ENCODE measurements at regions of chr18 and their contacts with region 1.

Region 1: GRCh38 chr18:79912409-79912991 is 39.0 kb downstream of the SLC66A2 start:
- DNase-seq: peak in 3 of 7 donors; percentile 21 to 49 (median 22)
- H3K4me3 ChIP-seq: no peak overlapping the region
- H3K27ac ChIP-seq: no peak overlapping the region
- H3K4me1 ChIP-seq: no peaks in the 10 kb centered on the region
- H3K27me3 ChIP-seq: no peaks in the 10 kb centered on the region
- CTCF ChIP-seq: no peak
- POLR2A ChIP-seq: no peak

Region 2: GRCh38 chr18:79720355-79720733 is 192.2 kb before region 1 on chr18:
- intact Hi-C with region 1: loop called in 1 of 2 experiments (anchors 10 kb)
- DNase-seq: no peak
- H3K4me3 ChIP-seq: no peak overlapping the region
- H3K27ac ChIP-seq: no peak overlapping the region
- H3K4me1 ChIP-seq: no peaks in the 10 kb centered on the region
- H3K27me3 ChIP-seq: no peaks in the 10 kb centered on the region
- CTCF ChIP-seq: no peak
- POLR2A ChIP-seq: no peak

Region 3: DNA sequence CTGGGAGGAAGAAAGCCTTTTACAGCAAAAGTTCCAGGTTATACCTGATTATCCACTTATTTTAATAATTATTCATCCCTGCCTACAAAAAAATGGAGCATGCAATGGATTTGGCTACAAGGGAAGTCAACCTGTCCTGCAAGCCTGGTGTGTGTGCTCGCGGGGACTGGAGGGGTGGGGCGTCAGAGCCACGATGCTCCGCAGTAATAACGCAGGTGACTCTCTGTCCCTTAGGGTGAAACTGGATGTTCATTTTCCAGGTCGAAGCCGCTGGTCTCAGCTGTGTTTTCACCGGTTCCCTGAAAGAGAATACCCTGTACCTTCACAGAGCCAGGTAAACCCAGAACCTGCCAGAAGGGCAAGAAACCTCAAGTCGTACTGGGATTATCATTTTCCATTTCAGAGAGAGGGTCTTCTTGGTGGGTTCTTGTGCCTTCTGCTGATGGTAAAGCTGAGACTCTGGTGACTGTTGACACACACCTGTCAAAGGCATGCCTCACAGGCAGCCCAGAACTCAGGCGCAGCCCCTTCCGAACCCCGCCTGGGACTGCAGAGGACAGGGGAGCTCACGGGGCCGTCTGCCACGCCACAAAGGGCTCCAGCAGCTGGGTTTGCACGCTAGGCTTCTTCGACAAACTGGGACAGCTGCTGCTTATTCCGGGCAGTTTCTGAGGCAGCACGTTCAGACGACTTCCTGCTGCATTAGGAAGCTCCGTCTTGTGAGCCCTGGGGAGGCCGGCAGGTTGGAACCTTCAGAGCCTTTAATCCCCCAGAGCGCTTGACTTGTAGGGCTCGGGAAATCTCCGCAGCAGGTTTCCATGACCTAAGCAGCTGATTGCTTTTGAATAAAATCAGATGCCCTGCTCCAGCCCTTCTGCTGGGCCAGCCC is 56.1 kb before region 1 on chr18:
- intact Hi-C with region 1: no loop called
- DNase-seq: peak in 4 of 7 donors; percentile 18 to 48 (median 25)
- H3K4me3 ChIP-seq: no peak overlapping the region
- H3K27ac ChIP-seq: no peak overlapping the region
- H3K4me1 ChIP-seq: no peaks in the 10 kb centered on the region
- H3K27me3 ChIP-seq: no peaks in the 10 kb centered on the region
- CTCF ChIP-seq: no peak
- POLR2A ChIP-seq: no peak

Region 4: GRCh38 chr18:80012714-80013113 is 100.2 kb after region 1 on chr18:
- intact Hi-C with region 1: no loop called
- DNase-seq: no peak
- H3K4me3 ChIP-seq: no peak overlapping the region
- H3K27ac ChIP-seq: no peak overlapping the region
- H3K4me1 ChIP-seq: peaks cover 7 to 14% of the 10 kb centered on the region in 2 donors
- H3K27me3 ChIP-seq: no peaks in the 10 kb centered on the region
- CTCF ChIP-seq: no peak
- POLR2A ChIP-seq: no peak